ENCODE measurements at regions of chr11 and their contacts with region 1.

Region 1: DNA sequence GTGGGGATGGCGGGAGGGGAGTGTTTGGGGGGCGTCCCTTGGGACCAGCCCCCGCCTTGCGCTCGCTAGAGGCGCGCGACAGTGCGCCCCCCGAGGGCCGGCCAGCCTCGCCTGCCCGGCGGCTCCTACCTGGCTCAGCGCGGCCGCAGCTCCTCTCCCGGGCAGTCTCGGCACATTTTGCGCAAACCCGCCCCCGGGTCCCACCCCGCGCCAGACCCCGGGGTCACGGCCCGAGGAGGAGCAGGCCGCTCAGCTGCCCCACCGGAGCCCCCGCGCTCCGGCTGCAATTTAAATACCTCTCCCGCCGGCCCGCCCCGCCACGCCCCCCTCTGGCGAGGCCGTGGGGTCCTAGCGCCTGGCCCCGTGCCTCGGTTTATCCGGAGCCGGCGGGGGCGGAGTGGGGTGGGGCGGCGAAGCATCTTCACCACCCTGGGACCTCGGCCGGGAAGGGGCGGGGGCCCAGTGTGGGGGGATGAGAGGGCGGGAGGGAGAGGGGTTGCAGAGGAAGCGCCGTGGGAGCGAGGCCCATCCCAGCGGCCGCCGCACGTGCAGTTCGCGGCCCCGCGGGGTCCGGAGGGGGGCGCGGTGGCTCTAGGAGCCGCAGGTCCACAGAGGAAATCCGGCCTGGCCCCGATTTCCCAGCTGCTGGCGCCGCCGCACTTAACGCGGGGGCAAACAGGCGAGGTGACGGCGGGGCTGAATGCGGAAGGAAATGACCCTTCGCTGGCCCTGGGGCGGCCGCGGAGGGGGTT is at the start of gene LRRC32:
- DNase-seq: peak; percentile 86
- ATAC-seq: peak; percentile 50 to 60
- total RNA-seq, gene LRRC32: 43.8 to 88.2 TPM

Region 2: GRCh38 chr11:76577199-76577920 is 93.3 kb before region 1 on chr11:
- intact Hi-C with region 1: loop called in 1 of 2 experiments (anchors 10 kb)
- DNase-seq: peak; percentile 80
- ATAC-seq: peak; percentile 83 to 86

Region 3: GRCh38 chr11:76610871-76611475 is 59.7 kb before region 1 on chr11:
- intact Hi-C with region 1: loop called (anchors 5 to 10 kb)
- DNase-seq: no peak
- ATAC-seq: peak; percentile 15 to 24